ENCODE measurements at regions of chr7 and their contacts with region 1.

Region 1: GRCh38 chr7:87876040-87876868 is at the starts of genes DBF4 and SLC25A40:
- DNase-seq: peak; percentile 99
- H3K4me3 Mint-ChIP-seq: peak within 1 kb of the TSS; percentile 88
- H3K27ac Mint-ChIP-seq: peak within 1 kb of the TSS; percentile 98
- H3K4me1 Mint-ChIP-seq: peaks cover 49% of the 10 kb centered on the region
- H3K27me3 Mint-ChIP-seq: no peaks in the 10 kb centered on the region
- total RNA-seq, gene DBF4: 65.7 and 74.8 TPM in 2 replicates
- total RNA-seq, gene SLC25A40: 43.3 and 51.0 TPM in 2 replicates

Region 2: GRCh38 chr7:87152107-87152844 is 724.0 kb before region 1 on chr7 and contains the start of gene DMTF1:
- intact Hi-C with region 1: loop called (anchors 5 kb)
- DNase-seq: peak; percentile 96
- H3K4me3 Mint-ChIP-seq: peak within 1 kb of the TSS; percentile 88
- H3K27ac Mint-ChIP-seq: peak within 1 kb of the TSS; percentile 95
- H3K4me1 Mint-ChIP-seq: peaks cover 27% of the 10 kb centered on the region
- H3K27me3 Mint-ChIP-seq: no peaks in the 10 kb centered on the region
- total RNA-seq, gene DMTF1: 95.7 and 102 TPM in 2 replicates

Region 3: DNA sequence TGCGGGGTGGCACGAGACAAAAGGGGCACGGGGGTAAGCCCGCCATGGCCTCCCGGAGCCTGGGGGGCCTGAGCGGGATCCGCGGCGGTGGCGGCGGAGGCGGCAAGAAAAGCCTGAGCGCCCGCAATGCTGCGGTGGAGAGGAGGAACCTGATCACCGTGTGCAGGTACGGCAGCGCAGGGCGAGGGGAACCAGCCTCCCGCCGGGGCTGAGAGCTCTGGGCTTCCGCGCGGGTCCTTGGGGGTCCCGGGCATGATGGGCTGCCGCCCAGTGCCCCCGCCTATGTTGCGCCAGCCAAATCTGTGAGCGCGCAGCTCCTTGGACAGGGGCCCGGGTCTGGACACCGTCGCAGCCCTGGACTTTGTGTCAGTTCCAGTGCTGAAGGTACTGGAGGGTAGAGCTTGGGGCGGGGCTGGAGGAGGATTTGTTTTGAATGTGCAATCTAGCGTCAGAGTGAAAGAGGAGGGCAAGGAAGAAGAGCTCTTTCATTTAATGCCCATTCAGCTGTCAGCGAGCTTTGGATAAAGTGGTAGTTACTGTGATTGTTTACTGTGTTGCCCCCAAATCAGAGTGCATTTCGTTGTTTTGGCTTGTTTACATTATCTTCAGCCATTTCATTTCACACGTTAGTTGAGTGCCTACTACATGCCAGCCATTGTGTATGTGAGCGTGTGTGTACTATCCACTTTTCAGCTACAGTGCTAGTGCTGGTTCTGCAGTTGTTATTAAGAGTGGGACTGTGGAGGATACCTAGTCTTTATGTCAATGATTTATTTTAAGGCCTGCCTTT is 247.3 kb before region 1 on chr7:
- intact Hi-C with region 1: loop called (anchors 5 kb)
- DNase-seq: peak; percentile 66
- H3K4me3 Mint-ChIP-seq: peak overlapping the region; percentile 88
- H3K27ac Mint-ChIP-seq: no peak overlapping the region
- H3K4me1 Mint-ChIP-seq: peaks cover 10% of the 10 kb centered on the region
- H3K27me3 Mint-ChIP-seq: peaks cover 26% of the 10 kb centered on the region

Region 4: DNA sequence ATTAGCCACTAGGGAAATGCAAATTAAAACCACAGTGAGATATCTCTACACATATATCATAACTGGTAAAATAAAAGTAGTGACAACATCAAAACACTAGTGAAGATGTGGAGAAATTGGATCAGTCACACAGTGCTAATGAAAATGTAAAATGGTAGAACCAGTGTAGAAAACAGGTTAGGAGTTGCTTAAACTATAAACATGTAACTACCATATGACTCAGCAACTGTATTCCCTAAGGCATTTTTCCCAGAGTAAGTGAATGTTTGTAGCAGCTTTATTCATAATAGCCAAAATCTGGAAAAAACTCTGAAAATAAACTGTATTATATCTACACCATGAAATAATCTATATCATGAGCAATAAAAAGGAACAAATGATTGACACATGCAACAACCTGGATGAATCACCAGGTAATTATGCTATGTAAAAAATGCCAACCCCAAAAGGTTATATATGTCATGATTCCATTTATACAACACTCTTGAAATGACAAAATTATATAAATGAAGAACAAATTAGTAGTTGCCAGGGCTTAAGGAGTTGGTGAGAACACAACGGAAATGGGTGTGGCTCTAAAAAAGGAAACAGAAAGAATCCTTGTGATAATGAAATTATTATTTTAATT is 22.9 kb before region 1 on chr7:
- intact Hi-C with region 1: loop called (anchors 2 kb)
- DNase-seq: no peak
- H3K4me3 Mint-ChIP-seq: no peak overlapping the region
- H3K27ac Mint-ChIP-seq: no peak overlapping the region
- H3K4me1 Mint-ChIP-seq: peaks cover 12% of the 10 kb centered on the region
- H3K27me3 Mint-ChIP-seq: no peaks in the 10 kb centered on the region

Region 5: GRCh38 chr7:87886875-87887274 is 10.6 kb after region 1 on chr7:
- intact Hi-C with region 1: loop called (anchors 1 kb)
- DNase-seq: no peak
- H3K4me3 Mint-ChIP-seq: no peak overlapping the region
- H3K27ac Mint-ChIP-seq: no peak overlapping the region
- H3K4me1 Mint-ChIP-seq: peaks cover 20% of the 10 kb centered on the region
- H3K27me3 Mint-ChIP-seq: no peaks in the 10 kb centered on the region

Region 6: DNA sequence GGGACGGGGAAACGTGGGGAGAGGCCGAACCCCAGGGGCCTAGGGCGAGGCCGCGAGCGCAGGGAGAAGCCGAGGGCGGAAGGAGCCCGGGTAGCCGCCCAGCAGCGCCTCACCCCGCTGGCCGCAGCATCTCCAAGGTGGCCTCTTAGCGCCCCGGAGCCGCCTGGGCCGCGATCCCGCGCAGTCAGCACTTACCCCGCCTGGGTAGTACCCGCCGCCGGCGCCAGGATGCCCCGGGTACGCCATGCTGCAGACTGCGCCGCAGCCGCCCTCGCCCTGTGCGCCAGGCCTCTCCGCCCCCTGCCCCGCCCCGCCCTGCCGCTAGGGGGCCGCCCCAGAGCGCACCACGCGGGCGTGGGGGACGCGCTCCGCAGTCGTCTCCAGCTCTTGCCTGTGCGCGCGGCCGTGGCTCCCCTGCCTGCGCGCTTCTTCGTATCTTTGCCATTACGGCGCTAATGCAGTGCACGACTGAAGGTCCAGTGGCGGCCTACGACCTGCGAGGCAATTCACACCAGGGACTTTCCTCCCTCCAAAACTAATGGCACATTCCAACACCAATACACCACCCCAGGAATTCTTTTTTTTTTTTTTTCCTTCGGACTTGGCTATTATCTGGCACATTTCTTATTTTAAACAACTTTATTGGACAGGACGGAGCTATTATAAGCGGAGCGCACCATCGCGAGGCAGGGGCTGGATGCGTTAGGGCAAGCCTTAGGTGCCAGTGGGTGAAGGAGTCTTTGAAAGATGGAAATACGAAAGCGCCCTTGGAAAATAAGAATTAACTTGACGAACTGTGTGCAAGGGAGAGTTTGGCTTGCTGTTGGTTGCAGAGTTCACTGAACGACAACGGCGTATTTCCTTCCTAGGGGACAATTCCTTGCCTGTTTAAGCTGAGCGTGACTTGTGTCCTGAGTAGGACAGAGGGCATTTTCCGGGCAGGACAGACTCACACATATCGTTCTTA is 343.8 kb after region 1 on chr7 and contains the start of gene SRI:
- intact Hi-C with region 1: loop called (anchors 1 kb)
- DNase-seq: peak; percentile 97
- H3K4me3 Mint-ChIP-seq: peak within 1 kb of the TSS; percentile 90
- H3K27ac Mint-ChIP-seq: peak within 1 kb of the TSS; percentile 96
- H3K4me1 Mint-ChIP-seq: peaks cover 28% of the 10 kb centered on the region
- H3K27me3 Mint-ChIP-seq: peaks cover 3% of the 10 kb centered on the region
- total RNA-seq, gene SRI: 188 and 207 TPM in 2 replicates